Mammary epithelial cell (primary cell): ENCODE measurements at regions of chr10 and their contacts with region 1.

Region 1: GRCh38 chr10:122342293-122343134 is 32.0 kb upstream of the PLEKHA1 start:
- DNase-seq: peak; percentile 46
- H3K4me3 ChIP-seq: no peak overlapping the region
- H3K27ac ChIP-seq: no peak overlapping the region
- H3K4me1 ChIP-seq: peaks cover 12% of the 10 kb centered on the region
- H3K27me3 ChIP-seq: no peaks in the 10 kb centered on the region
- CTCF ChIP-seq: peak; percentile 76 to 79

Region 2: DNA sequence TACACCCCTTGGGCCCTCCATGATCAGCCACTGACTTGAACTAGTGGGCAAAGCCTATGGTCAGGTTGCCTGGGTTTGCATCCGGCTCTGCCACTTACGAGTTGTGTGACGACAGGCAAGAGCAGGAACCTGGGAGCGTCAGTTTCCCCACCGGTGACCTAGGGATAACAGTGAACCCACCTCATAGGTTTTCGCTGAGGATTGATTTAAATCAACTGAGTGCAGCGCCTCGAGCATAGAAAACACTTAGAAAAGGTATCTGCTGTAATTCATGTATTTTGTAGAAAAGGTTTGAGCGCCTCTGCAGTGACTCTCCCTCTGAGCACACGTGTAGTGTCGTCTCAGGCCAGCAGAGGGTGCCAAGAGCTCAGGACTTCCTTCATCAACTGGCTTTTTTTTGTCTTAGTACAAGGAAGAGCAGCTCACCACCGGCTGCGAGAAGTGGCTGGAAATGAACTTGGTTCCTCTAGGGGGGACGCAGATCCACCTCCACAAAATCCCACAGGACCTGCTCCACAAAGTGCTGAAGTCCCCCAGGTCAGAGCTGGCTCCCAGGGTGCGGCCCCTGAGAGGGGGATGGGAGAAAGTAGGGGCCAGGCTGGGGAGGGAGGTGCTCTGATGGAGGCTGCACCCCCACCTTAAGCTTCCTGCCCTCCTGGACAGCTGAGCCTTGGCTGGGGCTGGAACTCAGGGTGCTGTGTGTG is 43.8 kb before region 1 on chr10:
- CTCF ChIA-PET with region 1: no interaction called
- dilution Hi-C with region 1: loop called (anchors 5 kb)
- in situ Hi-C with region 1: no loop called
- intact Hi-C with region 1: loop called (anchors 1 kb)
- DNase-seq: peak; percentile 60
- H3K4me3 ChIP-seq: peak overlapping the region in 1 of 3 experiments; percentile 4
- H3K27ac ChIP-seq: no peak overlapping the region
- H3K4me1 ChIP-seq: peaks cover 16% of the 10 kb centered on the region
- H3K27me3 ChIP-seq: no peaks in the 10 kb centered on the region
- CTCF ChIP-seq: peak; percentile 92 to 98

Region 3: GRCh38 chr10:122435212-122435827 is 92.8 kb after region 1 on chr10:
- CTCF ChIA-PET with region 1: no interaction called
- dilution Hi-C with region 1: loop called (anchors 5 kb)
- in situ Hi-C with region 1: loop called in 1 of 2 experiments (anchors 10 kb)
- intact Hi-C with region 1: loop called (anchors 1 kb)
- DNase-seq: no peak
- H3K4me3 ChIP-seq: no peak overlapping the region
- H3K27ac ChIP-seq: no peak overlapping the region
- H3K4me1 ChIP-seq: no peaks in the 10 kb centered on the region
- H3K27me3 ChIP-seq: no peaks in the 10 kb centered on the region
- CTCF ChIP-seq: peak; percentile 44 to 54

Region 4: GRCh38 chr10:122703439-122704118 is 361.1 kb after region 1 on chr10:
- CTCF ChIA-PET with region 1: no interaction called
- dilution Hi-C with region 1: no loop called
- in situ Hi-C with region 1: no loop called
- intact Hi-C with region 1: loop called (anchors 5 kb)
- DNase-seq: peak; percentile 65
- H3K4me3 ChIP-seq: no peak overlapping the region
- H3K27ac ChIP-seq: no peak overlapping the region
- H3K4me1 ChIP-seq: no peaks in the 10 kb centered on the region
- H3K27me3 ChIP-seq: no peaks in the 10 kb centered on the region
- CTCF ChIP-seq: peak; percentile 93 to 97

Region 5: GRCh38 chr10:123021517-123021916 is 679.0 kb after region 1 on chr10:
- CTCF ChIA-PET with region 1: no interaction called
- dilution Hi-C with region 1: no loop called
- in situ Hi-C with region 1: no loop called
- intact Hi-C with region 1: no loop called
- DNase-seq: no peak
- H3K4me3 ChIP-seq: no peak overlapping the region
- H3K27ac ChIP-seq: no peak overlapping the region
- H3K4me1 ChIP-seq: no peaks in the 10 kb centered on the region
- H3K27me3 ChIP-seq: no peaks in the 10 kb centered on the region
- CTCF ChIP-seq: peak; percentile 36 to 57